Activated naive CD4-positive, alpha-beta T cell treated with anti-CD3 and anti-CD28 coated beads for 36 hours (primary cell): ENCODE measurements at regions of chrX and their contacts with region 1.

Region 1: DNA sequence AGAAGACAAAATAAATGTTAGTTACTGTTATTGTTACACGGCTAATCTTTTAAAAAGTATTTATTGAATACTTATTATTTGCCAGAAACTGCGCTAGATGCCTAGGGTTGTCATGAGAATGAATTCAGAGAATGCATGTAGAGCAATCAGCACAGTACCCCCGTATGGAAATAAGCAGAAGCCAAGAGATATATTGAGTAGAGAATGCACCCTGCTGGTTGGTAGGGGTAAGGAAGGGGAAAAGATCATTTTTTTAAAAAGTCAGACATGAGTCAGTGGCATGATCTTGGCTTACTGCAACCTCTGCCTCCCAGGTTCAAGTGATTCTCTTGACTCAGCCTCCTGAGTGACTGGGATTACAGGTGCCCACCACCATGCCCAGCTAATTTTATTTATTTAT is 13.1 kb upstream of the DRP2 start:
- DNase-seq: peak; percentile 16
- H3K4me3 Mint-ChIP-seq: no peak overlapping the region
- H3K27ac Mint-ChIP-seq: no peak overlapping the region
- H3K4me1 Mint-ChIP-seq: peaks cover 18% of the 10 kb centered on the region
- H3K27me3 Mint-ChIP-seq: no peaks in the 10 kb centered on the region

Region 2: DNA sequence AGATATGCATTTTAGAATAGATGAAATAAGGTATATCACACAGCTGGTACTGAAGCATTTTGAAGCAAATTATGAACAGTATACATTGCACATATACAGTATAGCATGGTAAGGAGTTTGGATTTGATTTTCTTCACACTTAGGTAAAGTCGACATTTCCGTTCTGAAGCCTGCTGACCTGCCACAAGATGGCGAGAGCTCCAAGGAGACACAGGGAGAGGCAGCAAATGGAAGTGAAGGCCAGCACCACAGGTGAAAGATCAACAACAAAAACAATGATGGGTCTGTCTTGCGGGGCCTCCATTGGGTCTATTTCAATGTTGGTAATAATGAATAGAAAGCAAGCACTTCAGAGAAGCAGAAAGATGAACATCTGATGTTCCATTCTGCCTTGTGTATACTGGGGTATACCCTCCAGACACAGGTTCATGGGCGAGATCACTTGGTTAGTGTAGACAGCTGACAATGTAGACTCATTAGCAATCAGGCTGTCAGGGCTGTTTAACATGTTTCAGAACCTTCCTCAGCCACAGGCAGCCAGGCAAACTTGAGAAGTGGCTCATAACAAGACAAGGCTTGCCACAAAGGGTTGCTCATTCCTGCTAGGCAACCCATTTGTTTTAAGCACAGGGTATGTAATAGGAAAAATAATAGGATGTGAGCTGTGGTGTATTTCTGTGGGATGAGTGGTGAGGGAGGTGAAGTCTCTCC is 311.0 kb before region 1 on chrX:
- CTCF ChIA-PET with region 1: interaction called, 4 read pairs
- intact Hi-C with region 1: loop called (anchors 1 kb)
- DNase-seq: peak; percentile 54
- H3K4me3 Mint-ChIP-seq: no peak overlapping the region
- H3K27ac Mint-ChIP-seq: peak overlapping the region; percentile 71
- H3K4me1 Mint-ChIP-seq: no peaks in the 10 kb centered on the region
- H3K27me3 Mint-ChIP-seq: no peaks in the 10 kb centered on the region

Region 3: DNA sequence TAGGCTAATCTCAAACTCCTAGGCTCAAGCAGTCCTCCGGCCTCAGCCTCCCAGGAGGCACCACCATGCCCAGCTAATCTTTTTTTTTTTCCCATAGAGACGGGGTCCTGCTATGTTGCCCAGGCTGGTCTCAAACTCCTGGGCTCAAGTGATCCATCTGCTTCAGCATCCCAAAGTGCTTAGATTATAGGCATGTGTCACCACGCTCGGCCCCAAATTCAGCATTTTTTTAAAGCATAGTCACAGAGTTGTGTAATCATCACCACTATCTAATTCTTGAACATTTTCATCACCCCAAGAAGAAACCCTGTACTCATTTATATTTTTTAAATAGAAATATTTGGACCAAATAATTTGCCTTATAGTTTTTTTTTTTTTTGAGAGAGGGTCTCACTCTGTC is 98.2 kb before region 1 on chrX:
- CTCF ChIA-PET with region 1: no interaction called
- intact Hi-C with region 1: no loop called
- DNase-seq: no peak
- H3K4me3 Mint-ChIP-seq: no peak overlapping the region
- H3K27ac Mint-ChIP-seq: no peak overlapping the region
- H3K4me1 Mint-ChIP-seq: no peaks in the 10 kb centered on the region
- H3K27me3 Mint-ChIP-seq: no peaks in the 10 kb centered on the region

Region 4: DNA sequence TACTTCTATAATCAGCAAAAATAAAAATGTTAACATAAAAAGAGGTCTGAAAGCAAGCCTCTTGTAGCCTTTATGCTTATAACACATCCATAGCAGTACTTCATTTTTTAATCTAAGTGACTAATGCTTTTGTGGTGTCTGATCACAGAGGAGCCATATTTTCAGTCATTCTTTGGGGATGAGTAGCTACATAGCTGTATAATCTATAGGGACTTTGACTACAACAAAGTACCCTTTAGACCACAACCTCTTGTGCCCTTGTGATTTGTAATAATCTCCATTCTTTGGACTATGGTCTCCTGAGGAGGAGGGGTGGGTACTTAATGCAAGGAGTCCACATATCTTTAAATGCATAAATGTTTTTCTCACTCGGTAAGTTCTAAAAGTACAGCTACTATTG is 22.7 kb after region 1 on chrX:
- CTCF ChIA-PET with region 1: no interaction called
- intact Hi-C with region 1: no loop called
- DNase-seq: no peak
- H3K4me3 Mint-ChIP-seq: no peak overlapping the region
- H3K27ac Mint-ChIP-seq: no peak overlapping the region
- H3K4me1 Mint-ChIP-seq: no peaks in the 10 kb centered on the region
- H3K27me3 Mint-ChIP-seq: no peaks in the 10 kb centered on the region

Region 5: DNA sequence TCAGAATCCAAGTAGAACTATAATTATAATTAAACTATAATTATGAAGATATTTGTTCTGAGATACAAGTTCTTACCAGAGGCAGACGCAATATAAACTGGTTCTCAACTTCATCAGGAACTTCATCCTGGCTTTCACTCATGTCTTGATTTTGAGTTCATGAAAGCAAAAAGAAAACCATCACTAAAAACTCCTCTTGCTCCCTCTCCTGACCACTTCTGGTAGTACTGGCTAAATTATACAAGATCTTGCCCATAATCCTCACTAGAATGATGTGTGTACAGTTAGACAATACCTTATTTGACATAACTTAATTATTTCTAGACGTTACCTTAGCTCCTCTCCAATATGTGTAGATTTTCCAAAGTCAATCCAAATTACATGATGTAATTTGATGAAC is 80.9 kb after region 1 on chrX:
- CTCF ChIA-PET with region 1: no interaction called
- intact Hi-C with region 1: loop called (anchors 5 kb)
- DNase-seq: peak; percentile 6
- H3K4me3 Mint-ChIP-seq: no peak overlapping the region
- H3K27ac Mint-ChIP-seq: no peak overlapping the region
- H3K4me1 Mint-ChIP-seq: no peaks in the 10 kb centered on the region
- H3K27me3 Mint-ChIP-seq: peaks cover 1% of the 10 kb centered on the region